ENCODE measurements at regions of chr13 and their contacts with region 1.

Region 1: DNA sequence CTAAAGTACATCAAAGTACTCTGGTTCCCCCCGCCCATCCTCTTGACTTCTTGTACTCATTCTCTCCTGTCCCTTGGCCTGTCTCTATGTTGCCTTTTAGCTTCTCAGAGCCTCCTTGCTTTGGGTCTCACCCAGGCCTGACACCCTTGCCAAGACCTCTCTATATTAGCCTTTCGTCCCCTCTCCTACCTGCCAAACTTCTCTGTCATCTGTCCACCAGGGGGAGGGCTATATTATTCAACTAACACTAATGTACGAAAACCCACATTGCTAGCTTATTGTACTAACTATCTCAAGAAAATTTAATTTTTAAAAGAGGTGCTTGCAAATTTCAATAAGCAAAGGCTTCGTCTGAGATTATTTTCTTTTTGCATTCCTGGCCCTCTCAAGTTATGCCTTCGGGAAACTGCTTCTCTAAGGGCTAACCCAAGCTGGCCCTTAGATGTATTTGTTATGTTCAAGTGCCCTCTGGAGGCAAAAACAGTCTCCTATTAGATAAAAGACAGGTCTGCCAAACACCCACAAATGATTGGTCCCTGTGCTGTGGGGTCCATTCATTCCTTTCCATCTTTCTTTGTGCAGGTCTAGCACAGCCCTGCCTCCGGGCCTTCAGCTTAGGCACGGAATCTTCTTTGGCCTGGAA is 6.3 kb upstream of the MRPS31 start:
- DNase-seq: peak; percentile 28
- ATAC-seq: peak; percentile 87
- H3K4me3 Mint-ChIP-seq: peak overlapping the region; percentile 39; the same call in 1 of the 2 replicates
- H3K27ac Mint-ChIP-seq: no peak overlapping the region
- H3K4me1 Mint-ChIP-seq: peaks cover 12% of the 10 kb centered on the region
- H3K27me3 Mint-ChIP-seq: no peaks in the 10 kb centered on the region
- CTCF ChIP-seq: peak; percentile 75

Region 2: DNA sequence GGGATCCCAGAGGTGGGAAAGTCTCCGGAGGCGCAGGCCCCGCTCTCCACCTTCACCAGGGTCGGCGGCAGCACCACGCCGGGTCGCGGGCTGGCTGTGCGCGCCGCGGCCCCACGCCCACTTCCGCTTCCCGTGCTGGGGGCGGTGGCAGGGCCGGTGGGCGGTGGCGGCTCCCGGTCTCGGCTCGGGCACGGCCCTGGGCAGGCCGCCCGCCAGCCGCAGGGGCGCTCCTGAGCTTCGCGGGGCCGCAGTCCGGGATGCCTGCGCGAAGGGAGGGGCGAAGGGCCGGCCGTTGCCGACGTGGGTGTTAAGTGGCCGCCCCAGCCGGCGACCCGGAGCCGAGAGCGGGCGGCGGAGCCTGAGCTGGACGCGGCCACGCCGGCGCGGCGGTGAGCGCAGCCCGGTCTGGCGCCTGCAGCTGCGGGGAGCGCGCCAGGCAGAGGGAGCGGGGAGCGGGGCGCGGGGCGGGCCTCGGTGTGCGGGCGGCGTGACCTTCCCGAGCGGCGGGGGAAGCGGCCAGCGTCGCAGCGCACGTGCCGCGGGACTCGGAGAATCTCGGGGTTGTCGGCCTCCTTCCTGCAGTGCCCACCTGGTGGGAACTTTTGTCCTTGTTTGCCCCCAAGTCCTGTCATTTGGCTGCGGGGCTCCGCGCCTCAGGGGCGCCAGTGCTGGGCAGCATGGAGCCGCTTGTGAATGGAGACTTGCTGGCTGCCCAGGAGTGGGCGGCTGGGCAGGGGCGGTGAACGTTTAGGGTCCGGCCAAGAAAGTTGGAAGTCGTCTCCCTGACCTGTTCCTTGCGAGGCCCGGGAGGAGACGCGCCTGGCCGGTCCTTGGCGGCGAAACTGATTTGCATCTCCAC is 12.2 kb after region 1 on chr13 and contains the start of gene SLC25A15:
- CTCF ChIA-PET with region 1: interaction called, 36 read pairs
- POLR2A ChIA-PET with region 1: interaction called, 4 read pairs
- DNase-seq: peak; percentile 69
- ATAC-seq: peak; percentile 92
- H3K4me3 Mint-ChIP-seq: peak within 1 kb of the TSS; percentile 74
- H3K27ac Mint-ChIP-seq: no peak within 1 kb of the TSS
- H3K4me1 Mint-ChIP-seq: peaks cover 3% of the 10 kb centered on the region
- H3K27me3 Mint-ChIP-seq: no peaks in the 10 kb centered on the region
- CTCF ChIP-seq: no peak
- total RNA-seq, gene SLC25A15: 20.2 to 20.7 TPM (median 20.2 TPM) in 3 replicates

Region 3: DNA sequence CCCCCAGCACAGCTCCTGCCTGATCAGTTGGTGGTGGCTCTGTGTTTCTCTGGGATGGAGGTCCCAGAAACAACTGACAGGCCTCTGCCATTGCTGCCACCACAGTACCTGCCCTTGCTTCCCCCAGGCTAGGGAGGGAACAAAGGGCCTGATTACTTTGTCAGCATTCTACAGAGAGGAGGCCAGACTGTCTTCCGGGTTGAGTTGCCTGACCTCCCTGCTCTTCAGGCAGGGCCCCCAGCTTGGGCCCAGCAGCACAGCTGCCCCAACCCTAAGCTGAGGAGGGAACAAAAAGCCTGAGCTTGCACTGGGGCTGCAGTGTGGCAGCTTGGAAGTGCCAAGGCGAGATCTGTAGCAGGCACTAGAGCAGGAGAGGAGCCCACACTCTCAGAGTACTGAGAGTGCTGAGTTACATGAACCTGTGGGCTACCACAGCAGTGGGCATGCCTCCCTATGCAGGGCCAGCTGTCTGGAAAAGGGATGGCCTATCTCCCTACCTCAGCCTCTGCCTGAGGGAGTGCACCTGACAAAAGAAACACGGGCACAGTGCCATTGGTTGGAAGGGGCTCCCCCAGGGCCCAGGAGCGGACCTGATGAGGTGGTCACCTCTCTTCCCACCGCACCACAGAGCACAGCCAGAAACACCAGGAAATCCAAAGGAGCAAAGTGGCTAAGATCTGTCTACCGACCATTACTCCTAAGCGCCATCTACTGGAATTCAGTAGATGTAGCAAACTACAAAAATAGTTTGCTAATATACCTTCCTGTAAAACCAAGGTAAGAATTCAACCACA is 36.6 kb after region 1 on chr13:
- CTCF ChIA-PET with region 1: interaction called, 17 read pairs
- POLR2A ChIA-PET with region 1: no interaction called
- DNase-seq: no peak
- ATAC-seq: peak; percentile 95
- H3K4me3 Mint-ChIP-seq: no peak overlapping the region
- H3K27ac Mint-ChIP-seq: no peak overlapping the region
- H3K4me1 Mint-ChIP-seq: no peaks in the 10 kb centered on the region
- H3K27me3 Mint-ChIP-seq: no peaks in the 10 kb centered on the region
- CTCF ChIP-seq: peak; percentile 50

Measured in WTC11 (cell line).